BJ (cell line): ENCODE measurements at regions of chr20 and their contacts with region 1.

Region 1: GRCh38 chr20:54062812-54063280 is 7.5 kb downstream of the BCAS1 start:
- DNase-seq: no peak
- H3K4me3 ChIP-seq: no peak overlapping the region
- H3K27me3 ChIP-seq: no peaks in the 10 kb centered on the region
- CTCF ChIP-seq: peak; percentile 65

Region 2: GRCh38 chr20:53839423-53840176 is 223.2 kb before region 1 on chr20:
- CTCF ChIA-PET with region 1: no interaction called
- POLR2A ChIA-PET with region 1: no interaction called
- DNase-seq: no peak
- H3K4me3 ChIP-seq: no peak overlapping the region
- H3K27me3 ChIP-seq: no peaks in the 10 kb centered on the region
- CTCF ChIP-seq: no peak

Region 3: DNA sequence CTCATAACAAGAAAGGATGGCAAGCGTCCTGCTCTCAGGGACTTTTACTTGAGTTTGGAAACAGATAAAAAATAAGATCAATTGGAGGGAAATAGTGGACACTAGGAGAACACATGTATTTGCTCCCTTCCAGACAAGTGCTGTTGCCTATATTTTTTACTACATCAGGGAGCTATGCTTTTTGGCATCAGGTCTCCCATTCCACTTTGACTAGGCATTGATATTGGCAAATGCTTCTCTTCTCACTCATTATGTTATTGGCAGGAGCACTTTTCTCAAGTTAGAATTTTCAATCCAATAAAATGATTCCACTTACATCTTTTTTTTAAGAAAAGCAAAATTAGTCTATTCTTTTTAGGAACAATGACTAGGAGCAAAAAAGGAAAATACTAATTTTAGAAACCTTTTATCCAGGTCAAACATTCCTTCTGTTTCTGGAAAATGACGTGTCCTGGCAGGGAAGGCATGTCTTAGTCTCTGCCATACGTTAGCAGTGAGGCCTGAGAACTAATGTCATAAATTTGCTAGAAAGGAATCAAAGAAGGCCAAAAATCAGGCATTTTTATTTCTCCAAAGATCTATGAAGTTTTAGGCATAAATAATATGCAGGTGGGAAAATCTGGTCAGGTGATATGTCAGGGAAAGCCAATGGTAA is 13.8 kb before region 1 on chr20:
- CTCF ChIA-PET with region 1: interaction called, 11 read pairs
- POLR2A ChIA-PET with region 1: no interaction called
- DNase-seq: no peak
- H3K4me3 ChIP-seq: no peak overlapping the region
- H3K27me3 ChIP-seq: no peaks in the 10 kb centered on the region
- CTCF ChIP-seq: no peak

Region 4: DNA sequence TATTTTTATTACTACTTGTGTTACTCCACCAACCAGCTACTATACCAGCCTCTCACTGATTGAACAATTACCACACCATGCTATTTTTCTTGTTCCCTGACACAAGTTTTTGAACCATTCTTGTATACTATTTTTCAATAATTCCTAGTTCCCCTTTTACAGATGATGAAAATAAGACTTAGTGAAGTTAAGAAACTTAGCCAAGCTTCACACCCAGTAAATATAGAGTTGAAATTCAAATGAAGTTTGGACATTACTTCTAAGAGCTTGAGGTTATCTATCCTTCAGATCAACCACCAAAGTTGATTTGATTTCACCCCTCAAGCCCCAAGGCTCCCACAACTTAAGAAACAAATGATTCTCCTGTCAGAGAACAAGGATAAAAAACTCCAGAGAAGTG is 20.6 kb after region 1 on chr20:
- CTCF ChIA-PET with region 1: no interaction called
- POLR2A ChIA-PET with region 1: no interaction called
- DNase-seq: no peak
- H3K4me3 ChIP-seq: no peak overlapping the region
- H3K27me3 ChIP-seq: no peaks in the 10 kb centered on the region
- CTCF ChIP-seq: no peak